Left ventricle myocardium superior (tissue), 1 donor: ENCODE measurements at regions of chr12 and their contacts with region 1.

Region 1: DNA sequence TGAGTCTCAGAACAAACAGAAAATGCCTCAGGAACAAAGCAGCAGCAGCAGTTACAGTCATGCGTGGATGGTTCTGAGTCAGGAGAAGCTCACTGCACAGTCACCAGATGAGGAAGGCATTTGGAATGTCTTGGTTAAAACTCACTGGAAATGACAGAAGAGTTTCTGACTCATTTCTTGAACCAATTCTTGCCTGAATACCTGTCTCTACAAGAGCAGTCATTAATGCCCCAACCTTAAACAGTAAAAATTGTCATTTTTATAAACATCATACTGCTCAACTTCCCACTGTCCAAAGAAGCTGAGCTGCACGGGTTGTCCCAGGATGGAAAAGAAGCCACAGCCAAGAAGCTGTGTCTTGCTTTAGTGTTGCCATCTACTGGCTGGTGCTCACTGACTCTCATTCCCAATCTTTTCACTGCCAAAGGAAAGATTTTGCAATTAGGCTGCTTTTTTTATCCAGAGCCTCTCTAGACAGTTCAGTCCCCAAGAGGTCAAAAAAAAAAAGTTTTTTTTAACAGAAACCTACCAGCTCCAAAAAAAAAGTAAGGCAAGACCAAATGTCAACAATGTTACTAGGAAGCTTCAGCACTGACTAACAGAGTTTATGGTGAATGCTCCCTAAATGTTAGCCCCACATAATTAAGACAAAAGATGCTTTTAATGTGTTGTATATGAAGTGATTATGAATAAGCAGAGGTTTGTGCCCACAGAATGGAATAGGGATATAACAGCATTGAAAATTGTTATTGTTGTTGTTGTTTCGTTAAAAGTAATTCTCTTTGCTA is 40.4 kb downstream of the KICS2 start:
- DNase-seq: no peak
- ATAC-seq: peak; percentile 89

Region 2: DNA sequence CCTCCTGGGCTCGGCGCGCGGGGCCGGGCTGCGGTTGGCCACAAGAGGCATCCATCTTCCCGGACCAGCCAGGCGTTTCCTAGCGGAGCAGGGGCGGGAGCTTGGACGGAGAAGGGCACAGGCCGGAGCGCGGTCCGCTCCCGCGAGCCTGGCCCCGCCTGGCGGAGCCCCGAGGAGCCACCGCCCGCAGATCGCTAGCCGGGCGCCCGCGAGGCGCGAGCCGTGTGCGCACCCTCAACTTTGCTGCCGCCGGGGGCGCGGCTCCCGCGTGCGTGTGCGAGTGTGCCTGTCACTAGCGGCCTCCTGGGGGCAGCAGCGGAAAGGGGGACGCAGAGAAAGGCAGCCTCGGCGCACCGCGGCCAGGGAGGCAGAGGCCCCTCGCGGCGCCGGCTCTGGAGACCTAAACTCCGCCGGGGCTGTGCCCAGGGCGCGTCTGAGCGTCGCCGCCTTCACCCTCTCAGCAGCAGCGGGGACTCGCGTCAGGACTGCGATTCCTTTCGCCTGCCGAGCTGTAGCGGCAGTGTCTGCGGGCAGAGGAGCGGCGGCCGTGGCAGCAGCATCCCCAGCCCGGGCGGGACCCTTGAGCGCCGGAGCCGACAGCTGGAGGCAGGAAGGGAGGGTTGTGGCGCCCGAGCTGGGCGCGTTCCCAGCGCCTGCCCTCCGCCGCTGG is 337.8 kb before region 1 on chr12:
- intact Hi-C with region 1: loop called (anchors 2 kb)
- DNase-seq: peak; percentile 95
- ATAC-seq: peak; percentile 95

Region 3: DNA sequence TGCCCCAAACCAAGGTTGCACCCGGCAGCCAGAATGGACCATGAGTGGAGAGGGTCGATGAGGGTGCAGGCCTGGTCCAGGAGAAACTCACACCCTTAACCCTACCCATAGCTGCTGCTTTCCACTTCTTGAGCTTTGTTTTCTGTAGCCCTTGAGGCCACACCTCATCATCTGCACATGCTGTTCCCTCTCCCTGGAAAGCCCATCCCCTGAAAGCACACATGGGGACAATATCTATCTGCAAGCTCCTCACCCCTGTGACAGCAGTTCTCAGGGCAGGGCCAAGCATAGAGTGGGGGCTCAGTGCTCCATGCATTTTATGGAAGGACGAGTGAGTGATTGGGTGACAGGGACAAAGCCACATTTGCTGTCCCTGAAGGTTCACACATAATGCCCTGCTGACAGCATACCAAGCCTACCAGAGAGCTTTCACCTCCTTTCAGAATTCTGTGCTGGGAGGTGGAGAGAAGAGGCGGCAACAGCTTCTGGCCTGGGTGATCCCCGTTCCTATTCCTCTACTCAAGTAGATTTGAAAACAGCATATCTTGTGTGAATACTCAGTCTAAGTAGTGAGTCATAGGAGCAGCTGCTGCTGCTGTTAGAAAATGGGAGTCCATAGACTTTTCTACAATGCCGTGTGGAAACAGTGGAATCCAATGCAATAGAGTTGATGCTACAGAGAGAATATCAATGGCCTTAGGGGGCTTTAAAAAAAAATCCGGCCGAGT is 292.6 kb before region 1 on chr12:
- intact Hi-C with region 1: no loop called
- DNase-seq: no peak
- ATAC-seq: peak; percentile 72